ENCODE measurements at regions of chr16 and their contacts with region 1.

Region 1: DNA sequence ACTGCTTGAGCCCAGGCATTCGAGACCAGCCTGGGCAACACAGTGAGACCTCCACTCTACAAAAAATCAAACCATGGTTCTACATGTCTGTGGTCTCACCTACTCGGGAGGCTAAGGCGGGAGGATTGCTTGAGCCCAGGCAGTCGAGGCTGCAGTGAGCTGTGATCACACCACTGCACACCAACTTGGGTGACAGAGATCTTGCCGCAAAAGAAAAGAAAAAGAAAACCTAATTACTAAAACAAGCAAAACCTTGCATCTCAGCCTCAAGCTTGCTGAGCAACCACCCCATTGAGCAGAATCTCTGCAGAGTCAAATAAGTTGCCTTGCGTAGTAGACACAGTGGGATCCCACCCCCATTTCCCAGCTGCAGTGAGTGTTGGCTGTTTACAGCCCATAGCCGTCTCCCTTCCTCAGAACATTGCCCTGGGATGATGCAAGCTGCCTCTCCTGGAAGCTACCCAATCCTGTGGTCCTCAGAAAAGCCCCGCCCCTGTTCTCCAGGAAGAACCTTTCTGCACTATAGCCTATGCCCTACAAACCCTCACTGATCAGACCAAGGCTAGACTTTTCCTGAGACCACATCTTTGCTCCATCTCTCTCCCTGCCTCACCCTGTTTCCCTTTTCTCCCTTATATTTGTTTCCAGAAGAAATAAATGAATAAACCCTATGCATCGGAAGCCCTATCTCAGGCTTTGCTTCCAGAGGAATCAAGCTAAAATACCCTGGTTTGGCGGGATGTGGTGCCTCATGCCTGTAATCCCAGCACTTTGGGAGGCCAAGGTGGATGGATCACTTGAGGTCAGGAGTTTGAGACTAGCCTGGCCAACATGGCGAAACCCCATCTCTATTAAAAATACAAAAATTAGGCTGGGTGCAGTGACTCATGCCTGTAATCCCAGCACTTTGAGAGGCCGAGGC is 16.7 kb upstream of the ERN2 start:
- DNase-seq: no peak
- H3K4me3 ChIP-seq: no peak overlapping the region
- H3K27ac ChIP-seq: no peak overlapping the region
- H3K4me1 ChIP-seq: peaks cover 0 to 2% (median 0%) of the 10 kb centered on the region in 4 experiments
- H3K27me3 ChIP-seq: no peaks in the 10 kb centered on the region

Region 2: GRCh38 chr16:23534868-23535860 is 194.6 kb before region 1 on chr16:
- CTCF ChIA-PET with region 1: no interaction called
- POLR2A ChIA-PET with region 1: no interaction called
- DNase-seq: no peak
- H3K4me3 ChIP-seq: no peak overlapping the region
- H3K27ac ChIP-seq: no peak overlapping the region
- H3K4me1 ChIP-seq: peaks cover 0 to 5% (median 0%) of the 10 kb centered on the region in 4 experiments
- H3K27me3 ChIP-seq: no peaks in the 10 kb centered on the region

Region 3: DNA sequence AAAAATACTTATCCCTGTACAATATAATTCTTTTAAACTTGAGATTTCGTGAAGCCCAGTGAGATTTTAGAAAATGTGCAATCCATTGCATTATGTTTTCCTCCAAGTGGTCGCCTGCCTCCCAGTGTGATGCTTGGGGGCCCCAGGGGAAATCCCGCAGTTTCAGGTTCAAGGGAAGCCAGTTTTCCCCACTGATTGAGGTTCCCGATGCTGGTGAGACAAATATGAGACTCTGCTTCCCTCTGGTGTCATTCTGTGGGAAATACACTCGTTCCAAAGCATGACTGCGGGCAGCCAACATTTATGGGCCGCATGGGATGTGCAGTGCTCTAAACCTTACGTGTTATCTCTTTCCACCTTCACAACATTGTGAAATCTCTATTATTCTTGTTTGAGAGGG is 306.9 kb after region 1 on chr16:
- CTCF ChIA-PET with region 1: interaction called, 15 read pairs
- POLR2A ChIA-PET with region 1: no interaction called
- DNase-seq: peak; percentile 39 to 56 (median 52)
- H3K4me3 ChIP-seq: no peak overlapping the region
- H3K27ac ChIP-seq: no peak overlapping the region
- H3K4me1 ChIP-seq: peaks cover 4 to 31% (median 25%) of the 10 kb centered on the region in 4 experiments
- H3K27me3 ChIP-seq: no peaks in the 10 kb centered on the region

Region 4: DNA sequence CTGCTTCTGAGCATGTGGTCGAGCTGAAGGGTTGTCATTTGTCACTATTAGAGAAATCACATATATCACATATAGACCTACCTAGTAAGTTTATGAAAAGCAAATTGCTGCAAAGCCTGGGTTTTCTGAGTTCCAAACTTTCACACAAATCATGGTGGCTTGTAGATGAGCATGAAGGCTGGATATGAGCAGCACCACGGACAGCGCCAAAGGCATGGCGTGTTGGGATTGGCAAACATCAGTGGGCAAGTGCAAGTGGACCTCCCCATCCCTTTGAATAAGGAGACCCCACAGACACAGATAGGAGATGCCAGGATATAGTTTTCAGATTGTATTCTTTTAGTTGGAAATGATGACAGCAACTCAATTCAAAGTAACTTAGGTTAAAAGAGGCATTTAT is 448.7 kb after region 1 on chr16:
- CTCF ChIA-PET with region 1: no interaction called
- POLR2A ChIA-PET with region 1: no interaction called
- DNase-seq: peak in 2 of 3 donors; percentile 4 to 7
- H3K4me3 ChIP-seq: no peak overlapping the region
- H3K27ac ChIP-seq: no peak overlapping the region
- H3K4me1 ChIP-seq: no peaks in the 10 kb centered on the region
- H3K27me3 ChIP-seq: no peaks in the 10 kb centered on the region

Measured in common myeloid progenitor, CD34-positive (primary cell).